ENCODE measurements at regions of chr11 and their contacts with region 1.

Region 1: DNA sequence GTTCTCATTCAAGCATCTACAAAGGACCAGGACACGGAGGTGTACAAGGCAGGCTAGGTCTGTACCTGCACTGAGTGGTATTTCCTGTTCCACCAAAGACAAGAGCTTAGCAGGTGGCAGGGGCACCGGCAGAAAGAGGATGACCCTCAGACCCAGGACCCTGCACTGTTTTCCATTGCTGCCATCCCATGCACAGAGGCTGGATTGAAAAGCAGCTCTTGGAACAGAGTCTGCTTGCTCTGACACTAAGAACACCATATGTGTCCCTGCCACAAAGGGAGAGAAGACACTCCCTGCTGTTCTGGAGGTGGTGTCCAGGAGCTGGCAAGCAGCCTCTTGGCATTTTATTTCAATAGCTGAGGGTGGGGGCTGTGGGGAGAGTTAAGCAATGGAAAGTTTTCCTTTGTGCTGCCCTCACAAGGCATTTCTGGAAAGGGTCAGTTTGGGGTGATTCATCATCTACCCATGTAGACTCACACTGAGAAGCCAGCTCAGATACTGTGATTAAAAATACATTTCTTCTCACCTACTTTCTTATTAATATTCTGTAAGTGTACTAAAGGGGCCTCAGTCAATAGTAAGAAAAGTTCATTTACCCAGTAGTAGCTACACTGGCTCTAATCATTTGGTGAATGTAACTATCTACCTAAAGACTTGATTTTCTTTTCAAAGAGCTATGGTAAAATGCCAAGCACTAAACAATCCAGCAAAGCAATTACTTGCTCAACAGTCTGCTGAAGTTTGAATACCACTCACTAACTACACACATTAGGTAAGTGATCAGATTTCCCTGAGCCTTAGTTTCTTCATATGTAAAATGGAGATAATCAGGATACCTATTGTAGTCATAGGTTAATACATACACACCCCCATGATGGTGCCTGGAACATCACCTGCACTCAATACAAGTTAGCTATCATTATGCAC is 55.2 kb downstream of the SLC1A2 start:
- DNase-seq: peak; percentile 97
- H3K4me3 Mint-ChIP-seq: peak overlapping the region; percentile 20
- H3K27ac Mint-ChIP-seq: peak overlapping the region; percentile 64
- H3K4me1 Mint-ChIP-seq: peaks cover 47% of the 10 kb centered on the region
- H3K27me3 Mint-ChIP-seq: no peaks in the 10 kb centered on the region
- CTCF ChIP-seq: no peak

Region 2: GRCh38 chr11:35214792-35215193 is 149.3 kb before region 1 on chr11:
- CTCF ChIA-PET with region 1: interaction called, 6 read pairs
- POLR2A ChIA-PET with region 1: no interaction called
- intact Hi-C with region 1: loop called (anchors 5 kb)
- DNase-seq: peak; percentile 71
- H3K4me3 Mint-ChIP-seq: no peak overlapping the region
- H3K27ac Mint-ChIP-seq: peak overlapping the region; percentile 82
- H3K4me1 Mint-ChIP-seq: peaks cover 27% of the 10 kb centered on the region
- H3K27me3 Mint-ChIP-seq: no peaks in the 10 kb centered on the region
- CTCF ChIP-seq: no peak

Region 3: DNA sequence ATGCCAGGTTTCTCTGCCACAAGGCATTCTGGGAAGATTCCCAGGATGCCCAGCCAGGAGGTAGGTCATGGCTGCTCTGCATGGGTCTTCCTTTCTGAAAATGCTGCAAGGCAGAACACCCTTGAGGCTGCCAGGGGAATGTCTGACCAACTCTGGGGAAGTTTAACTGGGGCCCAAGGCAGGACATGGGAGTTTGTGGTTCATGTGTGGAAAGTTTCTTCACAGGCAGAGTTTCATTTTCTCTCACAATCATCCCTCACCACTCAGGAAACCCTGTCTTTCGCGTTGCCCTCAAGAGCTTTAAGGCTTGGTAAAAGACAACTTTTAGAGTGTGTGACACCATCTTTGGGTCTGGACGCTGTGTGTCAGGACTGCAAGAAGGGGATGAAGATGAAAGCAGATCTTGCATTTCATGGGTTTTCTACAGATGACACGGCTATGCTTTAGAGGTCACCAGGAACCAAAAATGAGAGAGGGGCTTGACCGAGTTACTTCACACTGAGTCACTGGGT is 91.7 kb before region 1 on chr11:
- CTCF ChIA-PET with region 1: interaction called, 4 read pairs
- POLR2A ChIA-PET with region 1: interaction called, 31 read pairs
- intact Hi-C with region 1: loop called (anchors 10 kb)
- DNase-seq: no peak
- H3K4me3 Mint-ChIP-seq: no peak overlapping the region
- H3K27ac Mint-ChIP-seq: no peak overlapping the region
- H3K4me1 Mint-ChIP-seq: peaks cover 29% of the 10 kb centered on the region
- H3K27me3 Mint-ChIP-seq: no peaks in the 10 kb centered on the region
- CTCF ChIP-seq: no peak

Region 4: DNA sequence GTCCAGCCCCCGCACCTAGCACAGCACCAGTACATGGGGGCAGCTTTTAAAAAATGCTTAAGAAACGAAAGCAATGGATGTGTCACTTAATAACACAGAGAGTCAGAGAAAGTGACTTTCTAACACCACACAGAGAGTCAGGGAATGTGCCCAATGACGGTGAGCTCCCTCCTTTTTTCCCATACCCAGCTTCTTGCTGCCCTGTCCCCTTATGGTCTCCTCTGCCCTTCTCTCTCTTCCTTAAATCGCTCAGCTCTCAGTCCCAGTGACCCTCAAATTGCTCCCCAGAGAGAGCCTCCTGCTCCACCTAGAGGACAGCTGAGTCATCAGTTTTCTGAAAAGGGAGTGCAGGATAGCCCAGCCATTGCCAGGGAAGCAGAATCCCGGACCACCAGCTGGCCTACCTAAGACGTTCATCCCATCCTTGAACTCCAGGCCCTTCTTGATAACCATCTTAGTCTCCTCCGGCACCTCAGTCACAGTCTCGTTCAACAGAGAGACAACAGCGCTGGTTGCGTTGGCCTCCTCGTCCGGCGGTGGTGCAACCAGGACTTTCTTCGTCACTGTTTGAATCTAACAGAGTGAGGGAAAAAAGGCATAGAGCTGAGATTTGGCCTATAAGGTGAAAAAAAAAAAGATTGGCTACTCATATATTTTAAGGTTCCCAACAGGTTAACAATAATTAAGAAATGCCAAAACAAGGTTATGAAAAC is 58.3 kb before region 1 on chr11:
- CTCF ChIA-PET with region 1: interaction called, 4 read pairs
- POLR2A ChIA-PET with region 1: interaction called, 17 read pairs
- intact Hi-C with region 1: no loop called
- DNase-seq: peak; percentile 61
- H3K4me3 Mint-ChIP-seq: no peak overlapping the region
- H3K27ac Mint-ChIP-seq: no peak overlapping the region
- H3K4me1 Mint-ChIP-seq: peaks cover 38% of the 10 kb centered on the region
- H3K27me3 Mint-ChIP-seq: no peaks in the 10 kb centered on the region
- CTCF ChIP-seq: peak; percentile 18

Region 5: GRCh38 chr11:35347921-35348331 is 16.2 kb before region 1 on chr11:
- CTCF ChIA-PET with region 1: interaction called, 16 read pairs
- POLR2A ChIA-PET with region 1: interaction called, 78 read pairs
- intact Hi-C with region 1: no loop called
- DNase-seq: no peak
- H3K4me3 Mint-ChIP-seq: no peak overlapping the region
- H3K27ac Mint-ChIP-seq: no peak overlapping the region
- H3K4me1 Mint-ChIP-seq: peaks cover 17% of the 10 kb centered on the region
- H3K27me3 Mint-ChIP-seq: no peaks in the 10 kb centered on the region
- CTCF ChIP-seq: no peak

Region 6: DNA sequence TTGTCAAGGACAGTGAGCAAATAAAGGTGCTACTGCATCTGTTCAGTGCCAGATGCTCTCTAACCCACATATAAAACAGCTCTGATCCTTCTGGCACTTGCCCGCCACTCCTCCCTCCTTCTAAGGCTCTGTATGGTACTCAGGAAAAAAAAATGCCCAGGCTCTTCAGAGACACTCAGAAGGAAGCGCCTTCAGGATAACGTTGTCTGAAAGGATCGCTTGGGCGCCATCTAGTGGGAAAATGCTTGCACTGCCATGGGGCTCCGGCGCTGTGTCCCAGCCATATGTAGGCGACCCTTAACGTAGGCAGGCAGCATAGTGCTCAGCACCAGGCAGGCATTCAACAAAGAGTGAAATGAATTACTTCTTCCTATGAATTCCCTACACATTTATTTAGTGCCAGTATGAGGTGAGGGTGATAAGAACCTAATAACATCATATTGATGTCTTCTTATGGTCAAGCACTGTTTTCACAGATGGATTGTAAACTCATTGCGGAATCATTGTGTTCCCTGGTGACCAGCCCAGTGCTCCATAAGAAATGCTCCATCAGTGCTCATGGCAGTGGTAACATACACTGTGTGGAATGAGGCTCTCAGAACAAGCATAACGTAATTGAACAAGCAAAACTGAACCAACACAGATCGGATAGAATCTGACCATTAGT is 121.7 kb after region 1 on chr11:
- CTCF ChIA-PET with region 1: no interaction called
- POLR2A ChIA-PET with region 1: no interaction called
- intact Hi-C with region 1: no loop called
- DNase-seq: peak; percentile 80
- H3K4me3 Mint-ChIP-seq: no peak overlapping the region
- H3K27ac Mint-ChIP-seq: no peak overlapping the region
- H3K4me1 Mint-ChIP-seq: peaks cover 17% of the 10 kb centered on the region
- H3K27me3 Mint-ChIP-seq: peaks cover 10% of the 10 kb centered on the region
- CTCF ChIP-seq: peak; percentile 92